T-cell (primary cell): ENCODE measurements at regions of chr20 and their contacts with region 1.

Region 1: DNA sequence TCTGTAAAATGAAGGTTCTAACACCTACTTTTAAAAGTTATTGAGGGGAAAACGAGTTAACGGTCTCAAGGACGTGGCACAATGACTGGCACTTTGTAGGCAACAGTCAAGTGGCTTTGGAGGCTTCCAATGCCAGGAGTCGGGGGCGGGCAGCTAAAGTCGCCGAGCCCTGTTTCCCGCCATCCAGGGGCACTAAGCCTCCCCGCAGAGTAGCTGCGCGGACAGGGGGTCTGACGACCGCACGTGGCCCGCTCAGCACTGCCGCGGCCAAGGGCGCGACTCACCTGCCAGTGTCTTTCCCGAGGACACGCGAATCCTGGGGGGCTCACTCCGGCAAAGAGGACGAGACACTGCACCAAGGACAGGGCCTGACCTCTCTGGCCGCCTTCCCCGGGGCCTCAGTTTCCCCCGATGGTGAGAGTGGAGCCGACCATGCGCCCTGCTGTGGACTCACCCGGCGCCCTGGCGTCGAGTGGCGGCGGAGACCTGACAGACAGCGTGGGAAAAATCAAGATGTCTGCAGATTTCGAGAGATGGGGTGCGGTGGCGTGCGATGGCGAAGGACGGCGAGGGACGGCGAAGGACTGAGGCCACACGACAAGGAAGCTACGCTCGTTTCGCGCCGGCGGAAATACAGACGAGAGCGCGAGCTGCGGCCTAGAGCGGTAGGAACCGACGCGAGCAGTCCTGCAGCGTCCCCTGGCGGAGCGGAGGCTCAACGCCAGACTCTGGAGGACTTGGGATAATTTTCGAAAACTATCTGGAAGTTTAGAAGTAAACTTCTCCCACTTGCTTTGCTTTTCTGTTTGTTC is at the start of gene SNHG17:
- DNase-seq: peak; percentile 75 to 96 (median 84)
- ATAC-seq: peak; percentile 84 to 91 (median 86)
- H3K4me3 ChIP-seq: peak within 1 kb of the TSS; percentile 70 to 86
- H3K4me3 Mint-ChIP-seq: peak within 1 kb of the TSS; percentile 89 to 95 (median 93)
- H3K27ac ChIP-seq: peak within 1 kb of the TSS; percentile 88
- H3K27ac Mint-ChIP-seq: peak within 1 kb of the TSS; percentile 89 to 95
- H3K4me1 ChIP-seq: peaks cover 6 to 29% of the 10 kb centered on the region in 2 experiments
- H3K4me1 Mint-ChIP-seq: peaks cover 41 to 43% (median 41%) of the 10 kb centered on the region in 3 donors
- H3K27me3 ChIP-seq: peaks cover 0 to 6% of the 10 kb centered on the region in 2 experiments
- H3K27me3 Mint-ChIP-seq: peaks cover 0 to 6% of the 10 kb centered on the region in 2 donors
- total RNA-seq, gene SNHG17: 46.7 to 77.9 (median 67.6) TPM

Region 2: GRCh38 chr20:36519944-36520343 is 1915.0 kb before region 1 on chr20:
- CTCF ChIA-PET with region 1: interaction called in 1 of 2 experiments, 13 read pairs
- POLR2A ChIA-PET with region 1: no interaction called
- DNase-seq: no peak
- ATAC-seq: no peak
- H3K4me3 ChIP-seq: no peak overlapping the region
- H3K4me3 Mint-ChIP-seq: no peak overlapping the region
- H3K27ac ChIP-seq: no peak overlapping the region
- H3K27ac Mint-ChIP-seq: peak overlapping the region in 1 of 2 donors; percentile 24
- H3K4me1 ChIP-seq: no peaks in the 10 kb centered on the region
- H3K4me1 Mint-ChIP-seq: no peaks in the 10 kb centered on the region
- H3K27me3 ChIP-seq: no peaks in the 10 kb centered on the region
- H3K27me3 Mint-ChIP-seq: no peaks in the 10 kb centered on the region

Region 3: DNA sequence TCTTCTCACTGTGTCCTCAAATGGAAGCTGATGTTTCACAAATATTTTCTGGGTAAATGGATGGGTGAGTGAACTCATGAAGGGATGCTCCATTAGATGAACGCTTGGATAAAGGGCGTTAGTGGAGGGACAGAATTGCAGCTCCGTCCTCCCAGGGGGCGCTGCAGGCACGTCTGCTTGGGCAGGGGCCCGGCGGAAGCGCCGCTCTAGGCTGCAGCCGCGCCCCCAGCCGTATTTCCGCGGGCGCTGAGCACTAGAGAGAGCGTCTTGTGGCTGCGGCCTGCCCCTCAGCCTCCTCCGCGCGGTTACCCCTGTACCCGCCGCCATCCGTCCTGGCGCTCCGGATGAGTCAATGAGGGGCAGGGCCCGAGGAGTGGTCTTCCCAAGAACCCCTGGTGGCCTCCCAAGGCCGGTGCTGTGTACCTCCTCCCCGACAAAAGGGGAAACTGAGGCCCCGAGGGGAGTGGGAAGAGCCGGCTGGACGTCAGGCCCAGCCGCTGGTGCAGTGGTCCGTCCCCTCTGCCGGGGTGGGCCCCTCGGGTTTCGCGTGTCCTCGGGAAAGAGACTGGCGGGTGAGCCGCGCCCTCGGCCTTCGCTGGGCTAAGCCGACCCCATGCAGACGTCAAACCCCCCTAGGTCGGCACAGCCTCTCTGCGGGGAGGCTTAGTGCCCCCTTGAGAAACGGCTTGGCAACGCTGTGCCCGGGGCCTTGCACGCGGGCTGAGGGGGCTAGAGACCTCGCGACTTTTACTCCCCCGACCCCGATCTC is 11.7 kb after region 1 on chr20:
- CTCF ChIA-PET with region 1: interaction called, 12 to 72 read pairs
- POLR2A ChIA-PET with region 1: interaction called, 4 to 23 read pairs
- DNase-seq: peak; percentile 79 to 96 (median 89)
- ATAC-seq: peak; percentile 95 to 98 (median 97)
- H3K4me3 ChIP-seq: peak overlapping the region; percentile 73 to 75
- H3K4me3 Mint-ChIP-seq: peak overlapping the region; percentile 83 to 89 (median 87)
- H3K27ac ChIP-seq: peak overlapping the region; percentile 70
- H3K27ac Mint-ChIP-seq: peak overlapping the region; percentile 81 to 86
- H3K4me1 ChIP-seq: peaks cover 0 to 19% of the 10 kb centered on the region in 2 experiments
- H3K4me1 Mint-ChIP-seq: peaks cover 27 to 31% (median 29%) of the 10 kb centered on the region in 3 donors
- H3K27me3 ChIP-seq: peaks cover 0 to 8% of the 10 kb centered on the region in 2 experiments
- H3K27me3 Mint-ChIP-seq: peaks cover 4 to 7% of the 10 kb centered on the region in 2 donors

Region 4: GRCh38 chr20:38472513-38473372 is 37.8 kb after region 1 on chr20 and contains the start of gene RALGAPB:
- CTCF ChIA-PET with region 1: interaction called in 1 of 2 experiments, 26 read pairs
- POLR2A ChIA-PET with region 1: interaction called in 1 of 2 experiments, 7 read pairs
- DNase-seq: peak; percentile 94 to 100 (median 97)
- ATAC-seq: peak; percentile 93 to 95 (median 94)
- H3K4me3 ChIP-seq: peak within 1 kb of the TSS; percentile 86 to 91
- H3K4me3 Mint-ChIP-seq: peak within 1 kb of the TSS; percentile 85 to 86 (median 85)
- H3K27ac ChIP-seq: peak within 1 kb of the TSS; percentile 85
- H3K27ac Mint-ChIP-seq: peak within 1 kb of the TSS; percentile 86 to 93
- H3K4me1 ChIP-seq: peaks cover 13 to 27% of the 10 kb centered on the region in 2 experiments
- H3K4me1 Mint-ChIP-seq: peaks cover 43 to 53% (median 53%) of the 10 kb centered on the region in 3 donors
- H3K27me3 ChIP-seq: peaks cover 0 to 3% of the 10 kb centered on the region in 2 experiments
- H3K27me3 Mint-ChIP-seq: no peaks in the 10 kb centered on the region
- total RNA-seq, gene RALGAPB: 42.7 to 50.1 (median 46.1) TPM

Region 5: GRCh38 chr20:38523697-38524096 is 88.7 kb after region 1 on chr20:
- CTCF ChIA-PET with region 1: no interaction called
- POLR2A ChIA-PET with region 1: no interaction called
- DNase-seq: no peak
- ATAC-seq: no peak
- H3K4me3 ChIP-seq: no peak overlapping the region
- H3K4me3 Mint-ChIP-seq: no peak overlapping the region
- H3K27ac ChIP-seq: no peak overlapping the region
- H3K27ac Mint-ChIP-seq: no peak overlapping the region
- H3K4me1 ChIP-seq: no peaks in the 10 kb centered on the region
- H3K4me1 Mint-ChIP-seq: peaks cover 0 to 2% (median 0%) of the 10 kb centered on the region in 3 donors
- H3K27me3 ChIP-seq: no peaks in the 10 kb centered on the region
- H3K27me3 Mint-ChIP-seq: no peaks in the 10 kb centered on the region

Region 6: GRCh38 chr20:38658879-38659596 is 224.1 kb after region 1 on chr20:
- CTCF ChIA-PET with region 1: no interaction called
- POLR2A ChIA-PET with region 1: no interaction called
- DNase-seq: peak in 20 of 35 experiments; percentile 10 to 53 (median 21)
- ATAC-seq: peak; percentile 71 to 83 (median 74)
- H3K4me3 ChIP-seq: no peak overlapping the region
- H3K4me3 Mint-ChIP-seq: no peak overlapping the region
- H3K27ac ChIP-seq: no peak overlapping the region
- H3K27ac Mint-ChIP-seq: no peak overlapping the region
- H3K4me1 ChIP-seq: peaks cover 0 to 2% of the 10 kb centered on the region in 2 experiments
- H3K4me1 Mint-ChIP-seq: no peaks in the 10 kb centered on the region
- H3K27me3 ChIP-seq: peaks cover 0 to 64% of the 10 kb centered on the region in 2 experiments
- H3K27me3 Mint-ChIP-seq: peaks cover 37 to 61% of the 10 kb centered on the region in 2 donors